ENCODE measurements at regions of chr17 and their contacts with region 1.

Region 1: DNA sequence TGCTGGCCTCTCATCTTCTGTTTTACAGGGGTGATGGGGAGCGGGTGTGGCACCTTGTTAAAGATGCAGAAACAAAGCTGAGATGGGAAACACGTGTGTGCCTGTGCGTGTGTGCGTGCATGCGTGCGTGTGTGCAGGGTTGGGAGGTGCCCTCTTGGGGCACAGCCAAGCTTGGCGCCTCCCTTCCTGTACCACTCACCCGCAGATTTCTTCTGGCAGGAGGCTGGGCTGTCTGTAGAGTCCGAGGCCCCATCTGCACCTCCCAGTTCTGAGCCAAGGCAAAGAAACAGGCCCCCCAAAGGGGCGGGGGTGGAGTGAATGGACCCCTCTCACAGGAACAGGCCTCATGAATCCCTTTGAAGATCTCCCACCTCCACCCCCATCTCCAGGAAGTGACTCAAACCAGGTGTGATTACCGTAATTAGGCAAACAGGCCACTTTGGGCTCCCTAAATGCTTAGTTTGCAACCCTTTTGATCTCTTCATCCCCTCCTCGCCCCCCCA is 20.9 kb downstream of the TNS4 start:
- DNase-seq: peak; percentile 91
- H3K4me3 Mint-ChIP-seq: peak overlapping the region; percentile 55
- H3K27ac Mint-ChIP-seq: peak overlapping the region; percentile 89
- H3K4me1 Mint-ChIP-seq: peaks cover 90% of the 10 kb centered on the region
- H3K27me3 Mint-ChIP-seq: peaks cover 5% of the 10 kb centered on the region

Region 2: GRCh38 chr17:40168262-40168832 is 312.2 kb before region 1 on chr17:
- CTCF ChIA-PET with region 1: no interaction called
- POLR2A ChIA-PET with region 1: no interaction called
- DNase-seq: peak; percentile 32
- H3K4me3 Mint-ChIP-seq: no peak overlapping the region
- H3K27ac Mint-ChIP-seq: peak overlapping the region; percentile 58
- H3K4me1 Mint-ChIP-seq: peaks cover 5% of the 10 kb centered on the region
- H3K27me3 Mint-ChIP-seq: no peaks in the 10 kb centered on the region

Region 3: DNA sequence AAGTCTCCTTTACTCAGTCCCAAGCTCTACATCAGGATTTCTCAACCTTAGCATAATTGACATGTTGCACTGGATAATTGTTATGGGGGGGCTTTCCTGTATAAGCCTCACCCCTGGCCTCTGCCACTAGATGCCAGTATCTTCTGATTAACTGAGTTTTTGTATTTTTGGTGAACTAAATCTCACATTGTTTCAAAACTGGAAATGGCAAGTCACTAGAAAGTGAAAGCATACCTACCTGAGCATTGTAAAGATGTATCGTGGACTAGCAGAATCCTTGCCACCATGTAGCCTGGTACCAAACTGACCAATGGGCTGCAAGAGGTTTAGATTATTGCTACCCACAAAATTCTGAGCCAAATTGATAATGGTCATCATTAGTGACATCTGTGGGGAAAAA is 77.9 kb before region 1 on chr17:
- CTCF ChIA-PET with region 1: no interaction called
- POLR2A ChIA-PET with region 1: no interaction called
- DNase-seq: no peak
- H3K4me3 Mint-ChIP-seq: no peak overlapping the region
- H3K27ac Mint-ChIP-seq: peak overlapping the region; percentile 63
- H3K4me1 Mint-ChIP-seq: peaks cover 29% of the 10 kb centered on the region
- H3K27me3 Mint-ChIP-seq: no peaks in the 10 kb centered on the region

Region 4: GRCh38 chr17:40497690-40498089 is 17.1 kb after region 1 on chr17:
- CTCF ChIA-PET with region 1: interaction called, 5 read pairs
- POLR2A ChIA-PET with region 1: interaction called, 14 read pairs
- DNase-seq: no peak
- H3K4me3 Mint-ChIP-seq: no peak overlapping the region
- H3K27ac Mint-ChIP-seq: no peak overlapping the region
- H3K4me1 Mint-ChIP-seq: no peaks in the 10 kb centered on the region
- H3K27me3 Mint-ChIP-seq: peaks cover 16% of the 10 kb centered on the region

Region 5: GRCh38 chr17:40510328-40510648 is 29.7 kb after region 1 on chr17:
- CTCF ChIA-PET with region 1: interaction called, 11 read pairs
- POLR2A ChIA-PET with region 1: interaction called, 115 read pairs
- DNase-seq: no peak
- H3K4me3 Mint-ChIP-seq: no peak overlapping the region
- H3K27ac Mint-ChIP-seq: no peak overlapping the region
- H3K4me1 Mint-ChIP-seq: peaks cover 27% of the 10 kb centered on the region
- H3K27me3 Mint-ChIP-seq: peaks cover 9% of the 10 kb centered on the region

Region 6: GRCh38 chr17:40542558-40543411 is 62.2 kb after region 1 on chr17:
- CTCF ChIA-PET with region 1: interaction called, 3 read pairs
- POLR2A ChIA-PET with region 1: interaction called, 16 read pairs
- DNase-seq: no peak
- H3K4me3 Mint-ChIP-seq: no peak overlapping the region
- H3K27ac Mint-ChIP-seq: no peak overlapping the region
- H3K4me1 Mint-ChIP-seq: peaks cover 60% of the 10 kb centered on the region
- H3K27me3 Mint-ChIP-seq: peaks cover 41% of the 10 kb centered on the region